GM10248 (cell line): ENCODE measurements at regions of chr2 and their contacts with region 1.

Region 1: GRCh38 chr2:105362862-105363591 is 25.7 kb downstream of the C2orf49 start:
- DNase-seq: no peak
- CTCF ChIP-seq: no peak

Region 2: DNA sequence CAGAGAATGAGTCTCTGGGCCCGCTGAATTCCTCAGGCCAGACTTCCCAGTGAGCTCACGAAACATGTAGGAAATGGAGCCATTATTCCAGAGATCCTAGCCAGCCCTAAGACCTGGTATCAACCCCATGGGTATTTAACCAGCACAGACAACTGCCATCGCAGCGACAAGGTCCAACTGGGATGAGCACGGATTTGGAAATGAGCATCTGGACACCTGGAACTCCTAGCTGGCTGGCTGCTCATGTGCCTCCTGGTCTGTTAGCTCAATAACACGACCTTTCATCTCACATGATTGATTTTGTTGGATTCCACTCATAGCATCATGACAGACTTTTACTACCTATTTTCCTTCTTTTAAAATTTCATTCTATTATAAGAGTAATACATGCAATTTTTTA is 458.1 kb before region 1 on chr2:
- CTCF ChIA-PET with region 1: no interaction called
- POLR2A ChIA-PET with region 1: no interaction called
- DNase-seq: no peak
- CTCF ChIP-seq: no peak

Region 3: DNA sequence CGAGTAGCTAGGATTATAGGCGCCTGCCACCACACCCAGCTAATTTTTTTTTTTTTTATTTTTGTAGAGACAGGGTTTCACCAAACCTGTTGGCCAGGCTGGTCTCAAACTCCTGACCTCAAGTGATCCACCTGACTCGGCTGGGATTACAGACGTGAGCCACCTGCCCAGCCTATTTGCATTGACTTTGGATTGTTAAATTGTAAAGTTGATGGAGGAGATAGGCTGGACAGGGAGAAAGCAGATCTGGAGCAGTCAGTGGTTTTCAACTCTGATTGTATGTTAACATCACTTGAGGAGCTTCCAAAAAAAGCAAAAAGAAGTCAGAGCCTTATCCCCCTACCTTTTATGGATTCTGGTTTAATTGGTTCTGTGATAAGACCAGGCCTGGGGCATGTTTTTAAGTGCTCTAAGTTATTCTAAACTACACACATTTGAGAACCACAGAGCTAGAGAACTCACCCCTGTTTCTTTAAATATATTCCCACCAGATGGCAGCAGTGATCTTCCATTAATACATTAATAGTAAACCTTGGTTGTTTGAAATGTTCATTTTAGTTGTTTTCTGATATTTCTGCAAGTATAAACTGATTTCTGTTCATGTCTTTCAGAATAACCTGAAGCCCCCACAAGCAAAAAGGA is 18.2 kb before region 1 on chr2:
- CTCF ChIA-PET with region 1: interaction called, 10 read pairs
- POLR2A ChIA-PET with region 1: no interaction called
- DNase-seq: no peak
- CTCF ChIP-seq: peak; percentile 36

Region 4: GRCh38 chr2:105377819-105378218 is 14.8 kb after region 1 on chr2:
- CTCF ChIA-PET with region 1: no interaction called
- POLR2A ChIA-PET with region 1: no interaction called
- DNase-seq: no peak
- CTCF ChIP-seq: no peak

Region 5: DNA sequence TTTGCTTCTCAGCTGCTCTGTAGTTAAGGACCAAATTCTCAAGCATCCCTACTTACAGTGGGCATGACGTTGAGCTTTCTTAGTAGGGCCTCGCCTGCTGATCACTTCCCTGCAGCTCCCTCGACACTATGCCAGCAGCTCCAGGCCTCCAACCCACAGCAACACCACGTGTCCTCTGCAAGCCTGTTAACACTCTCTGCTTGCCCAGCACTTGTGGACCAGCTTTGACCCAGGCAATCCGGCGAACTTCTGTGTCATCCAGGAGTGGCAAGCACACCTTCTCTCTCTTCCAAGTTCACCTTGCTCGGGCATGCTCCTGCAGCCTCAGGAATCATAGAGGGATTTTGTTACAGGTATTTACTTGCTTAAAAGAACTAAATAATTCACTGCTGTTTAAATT is 174.4 kb after region 1 on chr2:
- CTCF ChIA-PET with region 1: no interaction called
- POLR2A ChIA-PET with region 1: no interaction called
- DNase-seq: no peak
- CTCF ChIP-seq: no peak